Sigmoid colon (tissue), 7 donors: ENCODE measurements at regions of chr17 and their contacts with region 1.

Region 1: DNA sequence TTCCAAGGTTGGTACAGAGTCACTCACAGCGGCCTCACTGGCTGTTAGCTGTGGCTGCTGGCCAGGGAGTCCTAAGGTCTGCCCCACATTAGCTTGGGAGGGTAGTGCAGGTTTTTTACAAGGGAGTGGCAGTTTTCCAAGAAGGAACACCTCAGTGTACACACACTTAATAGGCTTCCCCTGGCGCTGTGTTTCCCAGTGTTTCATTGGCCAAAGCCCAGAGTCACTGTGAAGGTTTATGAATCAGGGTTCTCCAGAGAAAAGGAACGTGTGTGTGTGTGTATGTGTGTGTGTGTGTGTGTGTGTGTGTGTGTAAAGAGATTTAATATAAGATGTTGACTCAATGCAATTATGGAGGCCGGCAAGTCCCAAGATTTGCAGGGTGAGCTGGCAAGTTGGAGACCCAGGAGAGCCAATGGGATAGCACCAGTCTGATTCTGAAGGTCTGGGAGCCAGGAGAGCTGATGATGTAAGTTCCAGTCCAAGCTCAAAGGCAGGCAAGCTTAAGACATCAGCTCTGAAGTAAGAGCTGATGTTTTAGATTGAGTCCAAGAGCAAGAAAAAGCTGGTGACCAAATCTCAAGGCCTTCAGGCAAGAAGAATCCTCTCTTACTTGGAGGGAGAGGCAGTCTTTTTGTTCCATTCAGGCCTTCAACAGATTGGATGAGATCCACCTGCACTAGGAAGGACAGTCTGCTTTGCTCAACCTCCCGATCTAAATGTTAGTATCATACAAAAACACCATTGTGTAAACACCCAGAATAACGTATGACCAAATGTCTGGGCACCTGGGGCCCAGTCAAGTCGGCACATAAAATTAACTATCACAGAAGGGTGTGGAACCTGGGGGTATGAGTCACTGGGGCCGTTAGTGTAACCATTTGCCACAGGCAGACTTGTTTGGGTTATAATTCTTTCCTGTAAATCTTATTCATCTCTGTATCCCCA is 206.8 kb downstream of the PRKCA start:
- DNase-seq: peak; percentile 72
- H3K4me3 ChIP-seq: no peak overlapping the region
- H3K27ac ChIP-seq: peak overlapping the region in 3 of 4 donors; percentile 55 to 62 (median 58)
- H3K4me1 ChIP-seq: peaks cover 0 to 58% (median 49%) of the 10 kb centered on the region in 4 donors
- H3K27me3 ChIP-seq: no peaks in the 10 kb centered on the region
- CTCF ChIP-seq: no peak
- EP300 ChIP-seq: no peak
- POLR2A ChIP-seq: no peak

Region 2: GRCh38 chr17:66466840-66467367 is 42.3 kb before region 1 on chr17:
- intact Hi-C with region 1: loop called (anchors 5 kb)
- DNase-seq: peak; percentile 74
- H3K4me3 ChIP-seq: peak overlapping the region in 1 of 4 donors; percentile 9
- H3K27ac ChIP-seq: peak overlapping the region; percentile 51 to 75 (median 73)
- H3K4me1 ChIP-seq: peaks cover 0 to 78% (median 71%) of the 10 kb centered on the region in 4 donors
- H3K27me3 ChIP-seq: no peaks in the 10 kb centered on the region
- CTCF ChIP-seq: no peak
- EP300 ChIP-seq: no peak
- POLR2A ChIP-seq: no peak